Natural killer cell (primary cell): ENCODE measurements at regions of chr7 and their contacts with region 1.

Region 1: DNA sequence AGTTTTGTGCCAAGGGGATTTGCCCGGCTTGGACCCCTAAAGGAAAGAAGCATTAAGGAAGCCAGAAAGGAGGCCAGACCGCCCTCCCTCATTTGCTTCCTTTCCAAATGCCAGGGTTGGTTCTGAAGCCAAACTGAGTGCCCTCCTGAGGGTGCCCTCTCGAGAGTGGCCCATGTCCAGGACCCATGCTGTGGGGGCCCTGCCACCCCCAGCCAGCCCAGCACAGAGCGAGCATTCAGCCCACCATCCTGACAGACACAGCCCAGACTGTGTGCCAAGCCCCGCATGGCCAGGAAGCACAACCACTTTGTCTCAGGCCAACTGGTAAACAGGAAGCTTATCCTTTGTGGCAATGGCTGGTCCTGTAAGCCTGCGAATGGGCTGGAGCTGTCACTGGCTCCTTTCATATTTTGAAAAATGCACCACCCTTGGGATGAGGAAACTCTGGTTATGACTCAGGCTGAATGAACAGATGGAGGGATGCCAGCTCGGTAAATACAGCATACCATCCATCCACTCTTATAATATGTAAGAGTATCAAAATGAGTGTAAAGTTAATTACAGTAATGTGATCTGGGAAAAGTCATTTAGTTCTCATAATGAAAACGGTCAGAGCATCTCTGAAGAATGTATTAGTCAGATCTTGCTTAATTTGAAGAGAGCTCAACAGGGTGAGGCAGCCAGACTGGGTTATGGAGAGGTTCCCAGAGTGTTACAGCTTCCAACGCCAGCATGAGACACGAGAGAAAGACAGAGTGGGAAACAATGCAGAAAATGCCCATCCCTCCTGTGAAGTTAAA is 65.0 kb downstream of the STK17A start:
- DNase-seq: peak in 1 of 2 donors; percentile 66
- ATAC-seq: peak in 1 of 3 donors; percentile 8
- H3K4me3 ChIP-seq: peak overlapping the region; percentile 4
- H3K4me3 Mint-ChIP-seq: peak overlapping the region; percentile 80
- H3K27ac ChIP-seq: peak overlapping the region; percentile 97
- H3K27ac Mint-ChIP-seq: peak overlapping the region; percentile 90 to 99
- H3K4me1 ChIP-seq: peaks cover 95% of the 10 kb centered on the region
- H3K4me1 Mint-ChIP-seq: peaks cover 93 to 97% of the 10 kb centered on the region in 2 donors
- H3K27me3 ChIP-seq: no peaks in the 10 kb centered on the region
- H3K27me3 Mint-ChIP-seq: no peaks in the 10 kb centered on the region
- CTCF ChIP-seq: no peak

Region 2: GRCh38 chr7:43625453-43625852 is 22.4 kb before region 1 on chr7:
- intact Hi-C with region 1: loop called (anchors 1 kb)
- DNase-seq: peak; percentile 76 to 86
- ATAC-seq: peak; percentile 82 to 97 (median 93)
- H3K4me3 ChIP-seq: no peak overlapping the region
- H3K4me3 Mint-ChIP-seq: peak overlapping the region; percentile 86
- H3K27ac ChIP-seq: peak overlapping the region; percentile 80
- H3K27ac Mint-ChIP-seq: no peak overlapping the region
- H3K4me1 ChIP-seq: peaks cover 37% of the 10 kb centered on the region
- H3K4me1 Mint-ChIP-seq: peaks cover 79 to 80% of the 10 kb centered on the region in 2 donors
- H3K27me3 ChIP-seq: no peaks in the 10 kb centered on the region
- H3K27me3 Mint-ChIP-seq: no peaks in the 10 kb centered on the region
- CTCF ChIP-seq: no peak

Region 3: GRCh38 chr7:43637114-43637806 is 10.6 kb before region 1 on chr7:
- intact Hi-C with region 1: loop called (anchors 1 kb)
- DNase-seq: peak in 1 of 2 donors; percentile 65
- ATAC-seq: peak; percentile 77 to 81 (median 80)
- H3K4me3 ChIP-seq: no peak overlapping the region
- H3K4me3 Mint-ChIP-seq: peak overlapping the region; percentile 47
- H3K27ac ChIP-seq: peak overlapping the region; percentile 52
- H3K27ac Mint-ChIP-seq: peak overlapping the region; percentile 91 to 95
- H3K4me1 ChIP-seq: peaks cover 59% of the 10 kb centered on the region
- H3K4me1 Mint-ChIP-seq: peaks cover 83 to 87% of the 10 kb centered on the region in 2 donors
- H3K27me3 ChIP-seq: no peaks in the 10 kb centered on the region
- H3K27me3 Mint-ChIP-seq: no peaks in the 10 kb centered on the region
- CTCF ChIP-seq: no peak

Region 4: GRCh38 chr7:43679210-43680068 is 31.6 kb after region 1 on chr7:
- intact Hi-C with region 1: loop called (anchors 5 kb)
- DNase-seq: no peak
- ATAC-seq: no peak
- H3K4me3 ChIP-seq: no peak overlapping the region
- H3K4me3 Mint-ChIP-seq: peak overlapping the region; percentile 37
- H3K27ac ChIP-seq: peak overlapping the region; percentile 35
- H3K27ac Mint-ChIP-seq: peak overlapping the region; percentile 69 to 79
- H3K4me1 ChIP-seq: peaks cover 7% of the 10 kb centered on the region
- H3K4me1 Mint-ChIP-seq: peaks cover 41 to 48% of the 10 kb centered on the region in 2 donors
- H3K27me3 ChIP-seq: no peaks in the 10 kb centered on the region
- H3K27me3 Mint-ChIP-seq: no peaks in the 10 kb centered on the region
- CTCF ChIP-seq: no peak

Region 5: GRCh38 chr7:43700059-43700501 is 52.2 kb after region 1 on chr7:
- intact Hi-C with region 1: loop called (anchors 2 kb)
- DNase-seq: peak in 1 of 2 donors; percentile 80
- ATAC-seq: peak; percentile 70 to 94 (median 84)
- H3K4me3 ChIP-seq: no peak overlapping the region
- H3K4me3 Mint-ChIP-seq: peak overlapping the region; percentile 32
- H3K27ac ChIP-seq: no peak overlapping the region
- H3K27ac Mint-ChIP-seq: peak overlapping the region; percentile 54 to 63
- H3K4me1 ChIP-seq: no peaks in the 10 kb centered on the region
- H3K4me1 Mint-ChIP-seq: peaks cover 29 to 31% of the 10 kb centered on the region in 2 donors
- H3K27me3 ChIP-seq: no peaks in the 10 kb centered on the region
- H3K27me3 Mint-ChIP-seq: no peaks in the 10 kb centered on the region
- CTCF ChIP-seq: peak; percentile 79